ENCODE measurements at regions of chr7 and their contacts with region 1.

Region 1: GRCh38 chr7:47482013-47482875 is 99.7 kb downstream of the TNS3 start:
- DNase-seq: peak; percentile 81
- H3K4me3 ChIP-seq: 0 out of 4 replicates have a peak overlapping the region, but pooled peaks of 1 of the 2 experiments have one; percentile 9
- H3K27ac ChIP-seq: peak overlapping the region; percentile 67 to 92
- H3K4me1 ChIP-seq: peaks cover 29 to 53% of the 10 kb centered on the region in 2 experiments
- H3K27me3 ChIP-seq: no peaks in the 10 kb centered on the region
- CTCF ChIP-seq: no peak
- EP300 ChIP-seq: peak; percentile 63 to 89; a peak in 2 of 4 replicates
- RAD21 ChIP-seq: no peak

Region 2: DNA sequence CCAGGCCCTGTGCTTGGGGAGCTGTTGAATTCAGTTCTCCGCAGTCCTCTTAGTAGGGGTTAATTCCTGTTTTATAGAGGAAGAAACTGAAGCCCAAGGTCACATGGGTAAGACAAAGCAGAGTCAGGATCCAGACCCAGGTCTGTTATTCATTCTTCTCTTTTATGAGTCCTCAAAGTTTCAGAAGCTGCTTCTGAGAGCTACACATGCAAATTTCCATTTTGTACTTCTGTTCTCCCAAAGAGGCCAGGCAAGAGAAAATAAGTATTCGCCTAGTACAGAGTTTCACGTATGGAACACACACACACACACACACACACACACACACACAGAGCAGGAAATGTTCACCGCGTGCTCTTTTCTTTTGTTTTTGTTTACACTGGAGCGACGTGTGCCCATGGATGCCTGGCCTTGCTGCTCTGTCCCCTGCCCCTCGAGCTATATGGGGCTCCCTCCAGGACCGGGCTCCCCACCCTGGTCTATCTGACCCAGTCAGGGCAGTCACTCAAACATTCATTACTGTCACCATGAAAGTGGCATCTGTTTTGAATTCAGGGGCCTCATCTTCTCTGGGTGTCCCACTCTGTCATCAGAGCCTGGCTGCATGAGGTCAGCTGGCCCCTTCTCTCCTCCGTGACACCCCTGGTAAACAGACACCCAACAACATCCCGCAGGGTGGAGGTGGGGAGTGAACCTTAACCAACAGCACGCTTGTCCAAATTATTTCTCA is 15.3 kb after region 1 on chr7:
- CTCF ChIA-PET with region 1: interaction called, 19 read pairs
- POLR2A ChIA-PET with region 1: no interaction called
- DNase-seq: peak; percentile 60
- H3K4me3 ChIP-seq: no peak overlapping the region
- H3K27ac ChIP-seq: no peak overlapping the region; a peak in 1 of 4 replicates
- H3K4me1 ChIP-seq: peaks cover 22 to 52% of the 10 kb centered on the region in 2 experiments
- H3K27me3 ChIP-seq: no peaks in the 10 kb centered on the region
- CTCF ChIP-seq: no peak
- EP300 ChIP-seq: no peak
- RAD21 ChIP-seq: no peak

Region 3: GRCh38 chr7:47885309-47885986 is 403.2 kb after region 1 on chr7:
- CTCF ChIA-PET with region 1: no interaction called
- POLR2A ChIA-PET with region 1: no interaction called
- DNase-seq: no peak
- H3K4me3 ChIP-seq: no peak overlapping the region
- H3K27ac ChIP-seq: no peak overlapping the region
- H3K4me1 ChIP-seq: no peaks in the 10 kb centered on the region; a peak in 1 of 4 replicates
- H3K27me3 ChIP-seq: peaks cover 55% of the 10 kb centered on the region; the same call in 1 of the 2 replicates
- CTCF ChIP-seq: no peak
- EP300 ChIP-seq: no peak
- RAD21 ChIP-seq: no peak

Measured in SK-N-SH (cell line).